Heart left ventricle (tissue), 16 donors: ENCODE measurements at regions of chr2 and their contacts with region 1.

Region 1: GRCh38 chr2:111185638-111186022 is 64.9 kb downstream of the BCL2L11 start:
- DNase-seq: peak in 3 of 5 donors; percentile 25 to 56 (median 42)
- ATAC-seq: peak; percentile 66 to 84 (median 73)
- H3K4me3 ChIP-seq: no peak overlapping the region
- H3K27ac ChIP-seq: peak overlapping the region in 10 of 12 donors; percentile 4 to 63 (median 22)
- H3K4me1 ChIP-seq: peaks cover 0 to 23% (median 2%) of the 10 kb centered on the region in 12 donors
- H3K27me3 ChIP-seq: no peaks in the 10 kb centered on the region
- CTCF ChIP-seq: no peak
- POLR2A ChIP-seq: no peak

Region 2: DNA sequence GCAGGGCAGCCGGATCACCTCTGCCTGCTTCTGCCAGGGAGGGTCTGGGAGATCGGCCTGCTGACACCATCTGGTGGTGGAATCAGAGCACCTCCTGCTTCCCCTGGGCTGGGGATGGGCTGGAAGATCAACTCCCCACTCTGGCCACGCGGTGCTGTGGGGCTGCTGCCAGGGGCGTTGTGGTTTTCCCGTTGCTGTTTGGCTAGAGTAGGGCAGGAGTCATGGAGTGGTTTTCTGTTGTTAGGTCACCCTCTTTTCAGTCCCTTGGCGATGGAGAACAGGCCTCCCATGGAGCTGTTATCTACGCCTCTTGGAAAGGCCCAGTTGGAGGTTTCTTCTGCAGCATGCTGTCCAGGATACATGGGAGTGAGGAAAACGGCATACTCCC is 49.7 kb before region 1 on chr2:
- intact Hi-C with region 1: loop called in 1 of 10 experiments (anchors 10 kb)
- DNase-seq: peak in 4 of 5 donors; percentile 25 to 52 (median 41)
- ATAC-seq: peak; percentile 57 to 86 (median 78)
- H3K4me3 ChIP-seq: no peak overlapping the region
- H3K27ac ChIP-seq: no peak overlapping the region
- H3K4me1 ChIP-seq: peaks cover 0 to 47% (median 27%) of the 10 kb centered on the region in 12 donors
- H3K27me3 ChIP-seq: no peaks in the 10 kb centered on the region
- CTCF ChIP-seq: peak in 9 of 12 donors; percentile 24 to 41 (median 30)
- POLR2A ChIP-seq: no peak